PC-3 (cell line): ENCODE measurements at regions of chr13 and their contacts with region 1.

Region 1: DNA sequence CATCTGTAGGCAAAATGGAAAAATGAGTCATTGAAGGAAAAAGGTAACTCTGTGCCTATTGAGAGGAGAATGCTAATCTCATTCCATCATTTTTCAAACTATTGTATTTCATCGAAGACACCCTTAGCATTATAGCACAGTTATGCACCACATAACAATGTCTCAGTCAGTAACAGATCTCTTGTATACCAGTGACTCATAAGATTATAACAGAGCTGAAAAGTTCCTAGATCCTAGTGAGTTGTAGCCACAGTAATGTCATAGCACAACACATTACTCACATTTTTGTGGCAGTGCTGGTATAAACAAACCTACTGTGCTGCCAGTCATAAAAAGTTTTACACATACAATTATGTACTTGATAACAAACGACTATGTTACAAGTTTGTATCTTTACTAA is 1077.6 kb downstream of the DIAPH3 start:
- DNase-seq: peak; percentile 62
- ATAC-seq: peak; percentile 93
- H3K4me3 ChIP-seq: no peak overlapping the region
- H3K27ac ChIP-seq: no peak overlapping the region
- H3K4me1 ChIP-seq: no peaks in the 10 kb centered on the region
- H3K27me3 ChIP-seq: no peaks in the 10 kb centered on the region
- CTCF ChIP-seq: no peak

Region 2: GRCh38 chr13:59038824-59039223 is 47.3 kb before region 1 on chr13:
- CTCF ChIA-PET with region 1: no interaction called
- POLR2A ChIA-PET with region 1: no interaction called
- intact Hi-C with region 1: loop called (anchors 2 kb)
- DNase-seq: peak; percentile 58
- ATAC-seq: peak; percentile 95
- H3K4me3 ChIP-seq: peak overlapping the region; percentile 53; the same call in 1 of the 2 replicates
- H3K27ac ChIP-seq: peak overlapping the region; percentile 27; the same call in 1 of the 2 replicates
- H3K4me1 ChIP-seq: peaks cover 8% of the 10 kb centered on the region; the same call in 1 of the 2 replicates
- H3K27me3 ChIP-seq: no peaks in the 10 kb centered on the region
- CTCF ChIP-seq: no peak